ENCODE measurements at regions of chr3 and their contacts with region 1.

Region 1: GRCh38 chr3:113802795-113803455 is 35.7 kb upstream of the GRAMD1C start:
- DNase-seq: no peak
- H3K4me3 ChIP-seq: no peak overlapping the region
- H3K27ac ChIP-seq: no peak overlapping the region
- H3K4me1 ChIP-seq: peaks cover 34% of the 10 kb centered on the region
- H3K27me3 ChIP-seq: no peaks in the 10 kb centered on the region
- CTCF ChIP-seq: no peak
- POLR2A ChIP-seq: no peak

Region 2: GRCh38 chr3:113783463-113783862 is 19.5 kb before region 1 on chr3:
- CTCF ChIA-PET with region 1: interaction called, 4 read pairs
- POLR2A ChIA-PET with region 1: no interaction called
- dilution Hi-C with region 1: no loop called
- intact Hi-C with region 1: loop called (anchors 1 kb)
- DNase-seq: peak; percentile 90
- H3K4me3 ChIP-seq: peak overlapping the region in 1 of 3 experiments; percentile 41
- H3K27ac ChIP-seq: peak overlapping the region; percentile 94
- H3K4me1 ChIP-seq: peaks cover 26% of the 10 kb centered on the region
- H3K27me3 ChIP-seq: no peaks in the 10 kb centered on the region
- CTCF ChIP-seq: no peak
- POLR2A ChIP-seq: no peak

Region 3: GRCh38 chr3:113825090-113825489 is 22.2 kb after region 1 on chr3:
- CTCF ChIA-PET with region 1: interaction called, 12 read pairs
- POLR2A ChIA-PET with region 1: no interaction called
- dilution Hi-C with region 1: no loop called
- intact Hi-C with region 1: loop called (anchors 1 kb)
- DNase-seq: peak; percentile 45
- H3K4me3 ChIP-seq: no peak overlapping the region
- H3K27ac ChIP-seq: no peak overlapping the region
- H3K4me1 ChIP-seq: peaks cover 10% of the 10 kb centered on the region
- H3K27me3 ChIP-seq: no peaks in the 10 kb centered on the region
- CTCF ChIP-seq: peak in 1 of 2 donors; percentile 20
- POLR2A ChIP-seq: no peak